ENCODE measurements at regions of chr10 and their contacts with region 1.

Region 1: GRCh38 chr10:128024426-128024825 is 101.8 kb downstream of the MKI67 start:
- DNase-seq: peak; percentile 91
- H3K4me3 ChIP-seq: no peak overlapping the region
- H3K27ac ChIP-seq: no peak overlapping the region
- H3K4me1 ChIP-seq: peaks cover 32% of the 10 kb centered on the region
- H3K27me3 ChIP-seq: no peaks in the 10 kb centered on the region
- CTCF ChIP-seq: no peak

Region 2: DNA sequence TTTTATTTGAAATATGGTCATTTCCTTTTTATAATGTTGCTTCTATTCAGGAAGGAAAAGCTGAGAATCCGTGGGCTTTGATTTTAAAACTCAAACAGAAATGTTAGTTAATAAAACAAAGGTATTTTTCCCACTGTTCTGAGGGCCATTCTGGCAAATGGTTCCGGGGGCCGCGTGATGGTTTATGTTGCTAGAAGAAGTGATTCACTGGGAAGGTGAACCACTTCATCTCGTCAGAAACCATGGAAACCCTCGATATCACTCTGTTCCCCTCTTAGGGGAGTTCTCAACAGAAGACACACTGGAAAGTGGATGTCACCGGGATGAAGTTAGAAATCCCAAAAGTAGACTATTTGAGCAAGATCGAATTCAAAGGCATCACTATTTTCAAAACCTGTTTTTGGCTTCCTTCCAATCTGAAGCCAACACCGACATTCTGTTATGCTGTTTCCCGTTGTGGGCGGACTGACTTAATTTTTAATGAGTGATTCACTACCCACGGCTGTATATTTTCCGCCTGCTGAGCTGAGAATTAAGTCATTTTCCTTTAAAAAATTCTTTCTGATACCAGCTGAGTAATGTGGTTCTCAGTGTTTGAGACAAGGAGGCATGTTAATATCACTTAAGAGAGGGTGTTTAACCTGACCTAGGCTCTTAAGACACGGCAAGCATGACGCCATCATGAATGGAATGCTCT is 33.4 kb before region 1 on chr10:
- CTCF ChIA-PET with region 1: no interaction called
- POLR2A ChIA-PET with region 1: no interaction called
- intact Hi-C with region 1: loop called (anchors 1 kb)
- DNase-seq: peak; percentile 90
- H3K4me3 ChIP-seq: peak overlapping the region; percentile 26
- H3K27ac ChIP-seq: peak overlapping the region; percentile 67
- H3K4me1 ChIP-seq: peaks cover 70% of the 10 kb centered on the region
- H3K27me3 ChIP-seq: no peaks in the 10 kb centered on the region
- CTCF ChIP-seq: no peak